Naive thymus-derived CD4-positive, alpha-beta T cell (primary cell): ENCODE measurements at regions of chr13 and their contacts with region 1.

Region 1: GRCh38 chr13:95676762-95677563 is at the start of gene DNAJC3:
- DNase-seq: peak; percentile 96 to 99 (median 98)
- ATAC-seq: peak; percentile 97
- H3K4me3 ChIP-seq: peak within 1 kb of the TSS; percentile 88
- H3K4me3 Mint-ChIP-seq: peak within 1 kb of the TSS; percentile 84 to 99 (median 95)
- H3K27ac ChIP-seq: peak within 1 kb of the TSS; percentile 83
- H3K27ac Mint-ChIP-seq: peak within 1 kb of the TSS; percentile 91 to 98 (median 94)
- H3K4me1 ChIP-seq: peaks cover 25% of the 10 kb centered on the region in 2 donors
- H3K4me1 Mint-ChIP-seq: peaks cover 42 to 77% (median 72%) of the 10 kb centered on the region in 7 donors
- H3K27me3 ChIP-seq: no peaks in the 10 kb centered on the region
- H3K27me3 Mint-ChIP-seq: no peaks in the 10 kb centered on the region
- total RNA-seq, gene DNAJC3: 13.9 to 33.0 (median 22.7) TPM

Region 2: DNA sequence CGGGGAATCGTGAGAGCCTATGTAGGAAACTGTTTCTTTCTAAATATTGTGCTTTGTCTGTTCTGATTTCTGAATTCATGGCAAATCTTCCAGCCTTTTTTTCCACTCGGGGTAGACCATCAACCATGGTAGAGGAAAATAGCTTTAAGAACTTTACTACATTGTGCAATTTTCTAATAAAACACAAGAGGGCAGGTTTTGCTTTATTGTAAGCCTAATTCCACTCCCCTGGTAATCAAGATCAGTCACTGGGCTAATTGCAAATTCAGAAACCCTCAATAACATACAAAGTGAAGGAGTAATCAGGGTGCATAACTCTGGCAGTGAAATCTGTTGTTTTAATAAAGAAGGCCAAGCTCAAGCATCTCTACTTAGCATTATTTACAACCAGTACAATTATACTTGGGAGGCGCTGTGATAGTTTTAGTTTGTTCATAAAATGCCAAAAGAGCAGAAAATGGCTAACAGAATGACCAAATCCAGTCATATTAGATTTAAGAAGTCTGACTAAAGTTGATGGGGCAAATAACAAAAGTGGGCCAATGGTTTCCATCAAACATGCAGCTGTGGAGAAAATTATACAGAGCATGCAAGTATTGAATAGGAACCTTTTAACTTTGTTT is 1241.2 kb before region 1 on chr13:
- CTCF ChIA-PET with region 1: no interaction called
- POLR2A ChIA-PET with region 1: no interaction called
- intact Hi-C with region 1: no loop called
- DNase-seq: peak in 7 of 9 donors; percentile 18 to 63 (median 50)
- ATAC-seq: peak; percentile 73
- H3K4me3 ChIP-seq: no peak overlapping the region
- H3K4me3 Mint-ChIP-seq: no peak overlapping the region
- H3K27ac ChIP-seq: no peak overlapping the region
- H3K27ac Mint-ChIP-seq: no peak overlapping the region
- H3K4me1 ChIP-seq: no peaks in the 10 kb centered on the region
- H3K4me1 Mint-ChIP-seq: peaks cover 0 to 16% (median 0%) of the 10 kb centered on the region in 7 donors
- H3K27me3 ChIP-seq: no peaks in the 10 kb centered on the region
- H3K27me3 Mint-ChIP-seq: peaks cover 0 to 3% (median 0%) of the 10 kb centered on the region in 5 donors

Region 3: DNA sequence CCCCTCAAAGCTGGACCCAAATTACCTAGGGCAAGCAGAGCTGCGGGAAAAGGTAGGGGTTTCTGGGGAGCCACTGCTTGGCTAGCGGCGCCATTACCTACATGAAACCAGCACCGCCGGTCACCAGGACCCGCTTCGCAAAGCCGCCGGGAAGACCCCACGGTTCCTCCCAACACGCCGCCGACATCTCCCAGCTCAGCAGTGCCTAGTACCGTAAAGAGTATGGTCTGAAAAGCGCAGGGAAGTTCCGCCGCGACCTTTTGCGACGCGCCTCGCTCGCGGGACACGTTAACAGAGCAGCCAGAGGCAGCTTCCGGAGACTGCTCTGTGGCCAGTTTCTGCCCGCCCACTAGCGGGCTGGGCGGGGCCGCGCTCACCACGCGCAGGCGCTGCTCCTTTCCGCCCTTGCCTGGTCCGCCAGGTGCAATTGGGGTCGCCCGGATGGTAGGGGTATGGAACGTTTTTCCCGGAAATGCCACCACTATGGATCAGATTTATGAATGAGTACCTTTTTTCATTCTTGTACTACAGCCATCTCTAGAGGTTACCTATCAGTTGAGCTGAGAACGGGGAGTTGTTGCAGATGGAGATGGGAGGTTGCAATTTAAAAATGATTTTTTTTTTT is 1080.9 kb before region 1 on chr13 and contains the start of gene TGDS:
- CTCF ChIA-PET with region 1: no interaction called
- POLR2A ChIA-PET with region 1: interaction called, 3 read pairs
- intact Hi-C with region 1: loop called (anchors 1 kb)
- DNase-seq: peak; percentile 71 to 89 (median 86)
- ATAC-seq: peak; percentile 99
- H3K4me3 ChIP-seq: peak within 1 kb of the TSS; percentile 92
- H3K4me3 Mint-ChIP-seq: peak within 1 kb of the TSS; percentile 92 to 99 (median 97)
- H3K27ac ChIP-seq: peak within 1 kb of the TSS; percentile 80
- H3K27ac Mint-ChIP-seq: peak within 1 kb of the TSS; percentile 83 to 96 (median 93)
- H3K4me1 ChIP-seq: peaks cover 16 to 19% of the 10 kb centered on the region in 2 donors
- H3K4me1 Mint-ChIP-seq: peaks cover 29 to 53% (median 41%) of the 10 kb centered on the region in 7 donors
- H3K27me3 ChIP-seq: no peaks in the 10 kb centered on the region
- H3K27me3 Mint-ChIP-seq: no peaks in the 10 kb centered on the region
- total RNA-seq, gene TGDS: 5.9 to 20.5 (median 13.7) TPM

Region 4: DNA sequence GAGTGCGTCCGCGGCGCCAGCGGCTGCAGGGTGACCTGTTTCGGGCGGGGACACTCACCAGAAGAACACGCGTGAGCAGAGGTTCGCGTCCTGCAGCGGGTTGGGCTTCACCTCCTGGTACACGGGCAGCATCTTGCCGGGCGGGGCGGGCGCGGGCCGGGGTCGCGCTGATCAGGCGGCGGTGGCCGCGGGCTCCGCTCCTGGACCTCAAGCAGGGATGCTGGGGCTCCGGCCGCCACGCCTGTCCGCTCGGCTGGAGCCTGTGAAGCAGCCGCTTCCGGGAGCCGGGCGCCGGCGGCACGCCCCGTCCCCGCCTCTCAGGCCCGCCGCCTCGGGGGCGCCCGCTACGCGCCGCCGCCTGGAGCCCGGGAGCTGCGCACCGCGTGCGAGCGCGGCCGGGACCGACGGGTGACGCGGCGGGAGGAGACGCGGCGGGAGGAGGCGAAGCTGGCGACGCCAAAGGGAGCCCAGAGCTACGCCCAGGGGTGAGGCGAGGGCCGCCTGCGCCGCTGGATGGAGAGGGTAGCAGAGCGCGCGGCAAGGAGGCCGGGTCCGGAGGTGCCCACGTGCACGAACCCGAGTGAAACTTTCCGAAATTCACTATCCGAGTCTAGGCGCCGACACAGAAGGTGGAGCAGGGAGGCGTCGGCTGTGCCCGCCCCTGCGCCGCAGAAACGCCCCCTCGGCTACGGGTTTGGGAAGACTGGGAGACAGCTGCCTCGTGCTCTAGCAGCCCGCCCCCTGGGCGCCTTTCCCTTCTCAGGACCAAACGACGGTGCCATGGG is 375.6 kb before region 1 on chr13 and contains the start of gene ABCC4:
- CTCF ChIA-PET with region 1: no interaction called
- POLR2A ChIA-PET with region 1: interaction called, 3 read pairs
- intact Hi-C with region 1: loop called (anchors 2 kb)
- DNase-seq: peak; percentile 22 to 78 (median 48)
- ATAC-seq: peak; percentile 86
- H3K4me3 ChIP-seq: peak within 1 kb of the TSS; percentile 50
- H3K4me3 Mint-ChIP-seq: peak within 1 kb of the TSS; percentile 84 to 96 (median 87)
- H3K27ac ChIP-seq: peak within 1 kb of the TSS; percentile 41
- H3K27ac Mint-ChIP-seq: peak within 1 kb of the TSS in 8 of 9 donors; percentile 6 to 86 (median 66)
- H3K4me1 ChIP-seq: peaks cover 0 to 5% of the 10 kb centered on the region in 2 donors
- H3K4me1 Mint-ChIP-seq: peaks cover 7 to 41% (median 27%) of the 10 kb centered on the region in 7 donors
- H3K27me3 ChIP-seq: no peaks in the 10 kb centered on the region
- H3K27me3 Mint-ChIP-seq: peaks cover 0 to 15% (median 0%) of the 10 kb centered on the region in 5 donors
- total RNA-seq, gene ABCC4: 5.8 to 9.2 (median 7.5) TPM

Region 5: GRCh38 chr13:95627590-95627989 is 49.4 kb before region 1 on chr13:
- CTCF ChIA-PET with region 1: no interaction called
- POLR2A ChIA-PET with region 1: no interaction called
- intact Hi-C with region 1: no loop called
- DNase-seq: no peak
- ATAC-seq: no peak
- H3K4me3 ChIP-seq: no peak overlapping the region
- H3K4me3 Mint-ChIP-seq: no peak overlapping the region
- H3K27ac ChIP-seq: no peak overlapping the region
- H3K27ac Mint-ChIP-seq: no peak overlapping the region
- H3K4me1 ChIP-seq: no peaks in the 10 kb centered on the region
- H3K4me1 Mint-ChIP-seq: peaks cover 0 to under 1% (median 0%) of the 10 kb centered on the region in 7 donors
- H3K27me3 ChIP-seq: no peaks in the 10 kb centered on the region
- H3K27me3 Mint-ChIP-seq: peaks cover 17 to 36% (median 21%) of the 10 kb centered on the region in 5 donors

Region 6: DNA sequence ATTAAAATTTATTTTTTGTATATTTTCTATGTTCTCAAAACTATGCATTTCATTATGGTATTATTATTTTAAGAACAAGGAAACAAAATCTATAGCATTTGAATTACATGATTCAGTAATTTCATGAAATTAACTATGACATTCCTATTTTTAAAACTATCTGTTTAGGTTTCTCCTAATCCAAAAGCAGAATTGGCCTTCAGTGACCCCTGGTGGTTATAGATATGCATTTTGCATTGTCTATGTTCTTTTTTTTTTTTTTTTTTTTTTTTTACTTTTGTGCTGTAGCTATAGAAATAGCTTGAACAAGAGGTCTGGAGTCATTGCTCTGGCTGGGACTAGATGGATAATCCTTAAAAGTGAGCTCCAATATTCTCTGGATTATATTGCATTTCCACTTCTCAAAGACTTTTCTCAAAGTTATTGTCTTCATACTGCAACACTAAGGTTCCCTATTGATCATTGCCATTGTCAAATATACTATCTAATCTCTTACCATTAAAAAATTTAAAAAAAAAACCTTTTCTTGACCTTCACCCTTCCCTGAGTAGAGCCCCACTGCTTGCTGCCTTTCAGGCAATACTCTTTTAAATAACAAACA is 15.9 kb before region 1 on chr13:
- CTCF ChIA-PET with region 1: no interaction called
- POLR2A ChIA-PET with region 1: no interaction called
- intact Hi-C with region 1: loop called in 1 of 2 experiments (anchors 2 kb)
- DNase-seq: peak in 4 of 9 donors; percentile 11 to 18 (median 16)
- ATAC-seq: no peak
- H3K4me3 ChIP-seq: no peak overlapping the region
- H3K4me3 Mint-ChIP-seq: no peak overlapping the region
- H3K27ac ChIP-seq: no peak overlapping the region
- H3K27ac Mint-ChIP-seq: no peak overlapping the region
- H3K4me1 ChIP-seq: no peaks in the 10 kb centered on the region
- H3K4me1 Mint-ChIP-seq: peaks cover 0 to 2% (median 0%) of the 10 kb centered on the region in 7 donors
- H3K27me3 ChIP-seq: no peaks in the 10 kb centered on the region
- H3K27me3 Mint-ChIP-seq: peaks cover 21 to 48% (median 27%) of the 10 kb centered on the region in 5 donors

Region 7: DNA sequence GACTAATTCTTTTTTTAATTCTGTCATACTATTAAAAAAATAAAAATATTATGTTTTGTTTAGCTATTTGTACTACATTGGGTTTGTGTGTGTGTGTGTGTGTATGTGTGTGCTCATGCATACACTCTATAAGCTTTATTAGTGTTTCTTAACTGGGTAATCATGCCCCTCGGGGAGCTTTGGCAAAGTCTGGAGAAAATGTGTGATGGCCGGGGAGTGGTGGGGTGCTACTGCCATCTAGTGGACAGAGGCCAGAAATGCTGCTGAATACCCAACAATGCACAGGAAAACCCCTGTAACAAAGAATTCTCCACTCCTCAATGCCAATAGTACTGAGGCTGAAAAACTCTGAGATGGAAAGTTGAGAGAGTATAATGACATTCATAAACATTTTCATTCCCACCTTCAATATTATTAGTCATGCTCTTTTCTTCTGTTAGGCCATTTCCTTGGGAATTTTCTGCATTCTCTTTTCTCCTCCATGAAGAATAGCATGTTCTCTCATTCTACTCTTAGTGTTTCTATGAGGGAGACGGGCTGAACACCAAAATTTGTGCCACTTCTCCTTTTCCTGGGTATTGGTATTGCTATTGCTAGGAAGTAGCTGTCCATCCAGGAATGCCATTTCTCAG is 157.3 kb after region 1 on chr13:
- CTCF ChIA-PET with region 1: no interaction called
- POLR2A ChIA-PET with region 1: no interaction called
- intact Hi-C with region 1: loop called (anchors 5 kb)
- DNase-seq: peak; percentile 31 to 71 (median 58)
- ATAC-seq: peak; percentile 90
- H3K4me3 ChIP-seq: no peak overlapping the region
- H3K4me3 Mint-ChIP-seq: no peak overlapping the region
- H3K27ac ChIP-seq: no peak overlapping the region
- H3K27ac Mint-ChIP-seq: no peak overlapping the region
- H3K4me1 ChIP-seq: no peaks in the 10 kb centered on the region
- H3K4me1 Mint-ChIP-seq: peaks cover 0 to 2% (median 0%) of the 10 kb centered on the region in 7 donors
- H3K27me3 ChIP-seq: no peaks in the 10 kb centered on the region
- H3K27me3 Mint-ChIP-seq: peaks cover 18 to 36% (median 20%) of the 10 kb centered on the region in 5 donors

Region 8: GRCh38 chr13:95880331-95880730 is 203.4 kb after region 1 on chr13:
- CTCF ChIA-PET with region 1: no interaction called
- POLR2A ChIA-PET with region 1: no interaction called
- intact Hi-C with region 1: no loop called
- DNase-seq: no peak
- ATAC-seq: no peak
- H3K4me3 ChIP-seq: no peak overlapping the region
- H3K4me3 Mint-ChIP-seq: no peak overlapping the region
- H3K27ac ChIP-seq: no peak overlapping the region
- H3K27ac Mint-ChIP-seq: no peak overlapping the region
- H3K4me1 ChIP-seq: no peaks in the 10 kb centered on the region
- H3K4me1 Mint-ChIP-seq: no peaks in the 10 kb centered on the region
- H3K27me3 ChIP-seq: no peaks in the 10 kb centered on the region
- H3K27me3 Mint-ChIP-seq: peaks cover 0 to 16% (median 8%) of the 10 kb centered on the region in 5 donors